ENCODE measurements at regions of chr5 and their contacts with region 1.

Region 1: GRCh38 chr5:142699184-142699720 is 13.4 kb upstream of the FGF1 start:
- DNase-seq: peak; percentile 31
- ATAC-seq: peak; percentile 97
- H3K4me3 ChIP-seq: no peak overlapping the region
- H3K27ac ChIP-seq: no peak overlapping the region
- H3K4me1 ChIP-seq: no peaks in the 10 kb centered on the region
- H3K27me3 ChIP-seq: no peaks in the 10 kb centered on the region
- CTCF ChIP-seq: peak; percentile 89 to 96 (median 94)
- EP300 ChIP-seq: no peak
- POLR2A ChIP-seq: no peak
- RAD21 ChIP-seq: peak; percentile 95

Region 2: GRCh38 chr5:142151436-142152383 is 547.5 kb before region 1 on chr5:
- CTCF ChIA-PET with region 1: interaction called, 11 read pairs
- POLR2A ChIA-PET with region 1: no interaction called
- RAD21 ChIA-PET with region 1: interaction called, 7 read pairs
- SMC1A ChIA-PET with region 1: interaction called, 10 read pairs
- in situ Hi-C with region 1: no loop called
- intact Hi-C with region 1: loop called (anchors 1 kb)
- DNase-seq: peak; percentile 2
- ATAC-seq: peak; percentile 72
- H3K4me3 ChIP-seq: no peak overlapping the region
- H3K27ac ChIP-seq: no peak overlapping the region
- H3K4me1 ChIP-seq: no peaks in the 10 kb centered on the region
- H3K27me3 ChIP-seq: no peaks in the 10 kb centered on the region
- CTCF ChIP-seq: peak; percentile 61 to 85 (median 75); a peak in 5 of 6 replicates
- EP300 ChIP-seq: no peak
- POLR2A ChIP-seq: no peak
- RAD21 ChIP-seq: peak; percentile 82

Region 3: GRCh38 chr5:142403571-142403971 is 295.7 kb before region 1 on chr5:
- CTCF ChIA-PET with region 1: no interaction called
- POLR2A ChIA-PET with region 1: no interaction called
- RAD21 ChIA-PET with region 1: no interaction called
- SMC1A ChIA-PET with region 1: no interaction called
- in situ Hi-C with region 1: no loop called
- intact Hi-C with region 1: no loop called
- DNase-seq: no peak
- ATAC-seq: no peak
- H3K4me3 ChIP-seq: no peak overlapping the region
- H3K27ac ChIP-seq: no peak overlapping the region
- H3K4me1 ChIP-seq: no peaks in the 10 kb centered on the region
- H3K27me3 ChIP-seq: no peaks in the 10 kb centered on the region
- CTCF ChIP-seq: no peak
- EP300 ChIP-seq: no peak
- POLR2A ChIP-seq: no peak
- RAD21 ChIP-seq: no peak

Region 4: GRCh38 chr5:142474431-142475074 is 224.7 kb before region 1 on chr5:
- CTCF ChIA-PET with region 1: no interaction called
- POLR2A ChIA-PET with region 1: no interaction called
- RAD21 ChIA-PET with region 1: no interaction called
- SMC1A ChIA-PET with region 1: no interaction called
- in situ Hi-C with region 1: no loop called
- intact Hi-C with region 1: no loop called
- DNase-seq: no peak
- ATAC-seq: no peak
- H3K4me3 ChIP-seq: no peak overlapping the region
- H3K27ac ChIP-seq: no peak overlapping the region
- H3K4me1 ChIP-seq: no peaks in the 10 kb centered on the region
- H3K27me3 ChIP-seq: peaks cover 0 to 2% of the 10 kb centered on the region in 2 experiments; a peak in 1 of 4 replicates
- CTCF ChIP-seq: no peak
- EP300 ChIP-seq: no peak
- POLR2A ChIP-seq: no peak
- RAD21 ChIP-seq: no peak

Region 5: GRCh38 chr5:142605611-142606010 is 93.6 kb before region 1 on chr5:
- CTCF ChIA-PET with region 1: interaction called, 3 read pairs
- POLR2A ChIA-PET with region 1: no interaction called
- RAD21 ChIA-PET with region 1: no interaction called
- SMC1A ChIA-PET with region 1: no interaction called
- in situ Hi-C with region 1: loop called (anchors 5 kb)
- intact Hi-C with region 1: no loop called
- DNase-seq: no peak
- ATAC-seq: no peak
- H3K4me3 ChIP-seq: no peak overlapping the region
- H3K27ac ChIP-seq: no peak overlapping the region
- H3K4me1 ChIP-seq: no peaks in the 10 kb centered on the region
- H3K27me3 ChIP-seq: no peaks in the 10 kb centered on the region; a peak in 3 of 4 replicates
- CTCF ChIP-seq: no peak
- EP300 ChIP-seq: no peak
- POLR2A ChIP-seq: no peak
- RAD21 ChIP-seq: no peak

Region 6: GRCh38 chr5:142611154-142611553 is 88.1 kb before region 1 on chr5:
- CTCF ChIA-PET with region 1: interaction called, 4 read pairs
- POLR2A ChIA-PET with region 1: no interaction called
- RAD21 ChIA-PET with region 1: no interaction called
- SMC1A ChIA-PET with region 1: interaction called, 3 read pairs
- in situ Hi-C with region 1: loop called (anchors 5 kb)
- intact Hi-C with region 1: loop called (anchors 1 kb)
- DNase-seq: no peak
- ATAC-seq: peak; percentile 97
- H3K4me3 ChIP-seq: no peak overlapping the region
- H3K27ac ChIP-seq: no peak overlapping the region
- H3K4me1 ChIP-seq: no peaks in the 10 kb centered on the region
- H3K27me3 ChIP-seq: no peaks in the 10 kb centered on the region; a peak in 4 of 4 replicates
- CTCF ChIP-seq: peak; percentile 68 to 94 (median 71)
- EP300 ChIP-seq: no peak
- POLR2A ChIP-seq: no peak
- RAD21 ChIP-seq: peak; percentile 78

Region 7: GRCh38 chr5:142655339-142656267 is 43.6 kb before region 1 on chr5:
- CTCF ChIA-PET with region 1: interaction called, 46 read pairs
- POLR2A ChIA-PET with region 1: no interaction called
- RAD21 ChIA-PET with region 1: interaction called, 22 read pairs
- SMC1A ChIA-PET with region 1: interaction called, 13 read pairs
- in situ Hi-C with region 1: no loop called
- intact Hi-C with region 1: loop called (anchors 1 kb)
- DNase-seq: no peak
- ATAC-seq: peak; percentile 98
- H3K4me3 ChIP-seq: no peak overlapping the region
- H3K27ac ChIP-seq: no peak overlapping the region
- H3K4me1 ChIP-seq: no peaks in the 10 kb centered on the region
- H3K27me3 ChIP-seq: peaks cover 0 to 1% of the 10 kb centered on the region in 2 experiments; a peak in 2 of 4 replicates
- CTCF ChIP-seq: peak; percentile 86 to 96 (median 94)
- EP300 ChIP-seq: no peak
- POLR2A ChIP-seq: no peak
- RAD21 ChIP-seq: peak; percentile 78

Region 8: GRCh38 chr5:142753116-142753631 is 53.9 kb after region 1 on chr5:
- CTCF ChIA-PET with region 1: no interaction called
- POLR2A ChIA-PET with region 1: no interaction called
- RAD21 ChIA-PET with region 1: no interaction called
- SMC1A ChIA-PET with region 1: no interaction called
- in situ Hi-C with region 1: no loop called
- intact Hi-C with region 1: no loop called
- DNase-seq: no peak
- ATAC-seq: no peak
- H3K4me3 ChIP-seq: no peak overlapping the region
- H3K27ac ChIP-seq: no peak overlapping the region
- H3K4me1 ChIP-seq: no peaks in the 10 kb centered on the region
- H3K27me3 ChIP-seq: no peaks in the 10 kb centered on the region; a peak in 2 of 4 replicates
- CTCF ChIP-seq: no peak
- EP300 ChIP-seq: no peak
- POLR2A ChIP-seq: no peak
- RAD21 ChIP-seq: no peak

Region 9: GRCh38 chr5:144084971-144085370 is 1385.7 kb after region 1 on chr5:
- CTCF ChIA-PET with region 1: no interaction called
- POLR2A ChIA-PET with region 1: no interaction called
- RAD21 ChIA-PET with region 1: no interaction called
- SMC1A ChIA-PET with region 1: no interaction called
- in situ Hi-C with region 1: no loop called
- intact Hi-C with region 1: no loop called
- DNase-seq: no peak
- ATAC-seq: no peak
- H3K4me3 ChIP-seq: no peak overlapping the region
- H3K27ac ChIP-seq: no peak overlapping the region
- H3K4me1 ChIP-seq: no peaks in the 10 kb centered on the region
- H3K27me3 ChIP-seq: no peaks in the 10 kb centered on the region
- CTCF ChIP-seq: no peak
- EP300 ChIP-seq: no peak
- POLR2A ChIP-seq: no peak
- RAD21 ChIP-seq: no peak